ENCODE measurements at regions of chr5 and their contacts with region 1.

Region 1: DNA sequence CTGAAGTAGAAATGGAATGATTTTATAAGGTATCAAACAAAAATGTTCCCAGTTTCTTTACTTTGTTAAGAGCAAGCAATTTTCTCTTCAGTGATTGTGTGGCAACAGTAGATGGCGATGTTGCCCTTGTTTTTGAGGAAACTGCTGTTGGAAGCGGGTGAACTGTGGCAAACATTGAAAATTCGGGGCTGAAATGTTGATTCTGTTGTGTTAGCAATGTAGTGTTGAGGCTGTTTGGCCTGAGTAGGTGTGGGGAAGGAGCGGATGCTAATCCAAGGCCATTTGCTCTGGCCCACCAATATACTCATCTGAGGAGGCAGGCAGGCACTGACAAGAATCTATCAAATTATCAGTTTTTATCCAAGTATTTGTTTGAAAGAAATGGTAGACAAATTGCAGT is 129.8 kb downstream of the SLC12A2 start:
- DNase-seq: no peak
- H3K4me3 ChIP-seq: no peak overlapping the region
- H3K27ac ChIP-seq: no peak overlapping the region
- H3K4me1 ChIP-seq: peaks cover 7 to 14% (median 11%) of the 10 kb centered on the region in 4 donors
- H3K27me3 ChIP-seq: no peaks in the 10 kb centered on the region
- CTCF ChIP-seq: peak; percentile 71 to 83 (median 74)
- EP300 ChIP-seq: no peak
- POLR2A ChIP-seq: no peak

Region 2: DNA sequence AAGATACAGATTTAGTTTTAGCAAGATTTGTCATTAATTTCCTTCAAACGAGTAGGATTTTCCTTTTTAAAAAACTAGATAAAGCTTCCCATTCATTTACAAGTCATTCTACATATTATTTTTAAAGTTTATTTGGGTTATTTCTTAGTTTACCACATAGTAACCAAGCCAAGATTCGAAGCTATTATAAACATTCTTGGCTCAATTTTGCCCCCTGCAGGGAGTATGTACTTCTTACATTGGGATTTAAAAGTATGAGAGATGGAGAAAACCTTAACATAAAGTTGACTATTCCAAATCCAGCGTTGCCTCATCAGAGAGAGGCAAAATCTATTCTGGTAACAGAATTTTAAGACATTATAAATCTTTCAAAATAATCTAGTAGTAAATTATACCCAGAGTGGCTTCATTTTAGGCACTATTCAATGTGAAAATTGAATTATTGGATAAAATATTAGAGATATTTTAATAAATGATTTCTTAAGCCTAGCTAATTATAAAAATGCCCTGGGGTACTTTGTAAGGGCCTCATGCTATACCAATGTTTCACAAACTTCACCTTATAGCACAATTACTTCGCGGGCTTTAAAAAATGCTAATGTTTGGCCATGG is 285.6 kb after region 1 on chr5:
- intact Hi-C with region 1: loop called (anchors 2 kb)
- DNase-seq: no peak
- H3K4me3 ChIP-seq: no peak overlapping the region
- H3K27ac ChIP-seq: no peak overlapping the region
- H3K4me1 ChIP-seq: peaks cover 0 to 6% (median 3%) of the 10 kb centered on the region in 4 donors
- H3K27me3 ChIP-seq: no peaks in the 10 kb centered on the region
- CTCF ChIP-seq: peak; percentile 45 to 60 (median 54)
- EP300 ChIP-seq: no peak
- POLR2A ChIP-seq: no peak

Region 3: GRCh38 chr5:128674825-128675446 is 461.6 kb after region 1 on chr5:
- intact Hi-C with region 1: loop called (anchors 5 kb)
- DNase-seq: no peak
- H3K4me3 ChIP-seq: no peak overlapping the region
- H3K27ac ChIP-seq: no peak overlapping the region
- H3K4me1 ChIP-seq: peaks cover 0 to 12% (median 3%) of the 10 kb centered on the region in 4 donors
- H3K27me3 ChIP-seq: no peaks in the 10 kb centered on the region
- CTCF ChIP-seq: peak; percentile 49 to 59 (median 52)
- EP300 ChIP-seq: no peak
- POLR2A ChIP-seq: no peak

Region 4: GRCh38 chr5:128844354-128844923 is 631.1 kb after region 1 on chr5:
- intact Hi-C with region 1: loop called (anchors 5 kb)
- DNase-seq: no peak
- H3K4me3 ChIP-seq: no peak overlapping the region
- H3K27ac ChIP-seq: no peak overlapping the region
- H3K4me1 ChIP-seq: no peaks in the 10 kb centered on the region
- H3K27me3 ChIP-seq: no peaks in the 10 kb centered on the region
- CTCF ChIP-seq: peak; percentile 39 to 47 (median 43)
- EP300 ChIP-seq: no peak
- POLR2A ChIP-seq: no peak

Measured in esophagus muscularis mucosa (tissue), 4 donors.